Gastrocnemius medialis (tissue), 4 donors: ENCODE measurements at regions of chr5 and their contacts with region 1.

Region 1: DNA sequence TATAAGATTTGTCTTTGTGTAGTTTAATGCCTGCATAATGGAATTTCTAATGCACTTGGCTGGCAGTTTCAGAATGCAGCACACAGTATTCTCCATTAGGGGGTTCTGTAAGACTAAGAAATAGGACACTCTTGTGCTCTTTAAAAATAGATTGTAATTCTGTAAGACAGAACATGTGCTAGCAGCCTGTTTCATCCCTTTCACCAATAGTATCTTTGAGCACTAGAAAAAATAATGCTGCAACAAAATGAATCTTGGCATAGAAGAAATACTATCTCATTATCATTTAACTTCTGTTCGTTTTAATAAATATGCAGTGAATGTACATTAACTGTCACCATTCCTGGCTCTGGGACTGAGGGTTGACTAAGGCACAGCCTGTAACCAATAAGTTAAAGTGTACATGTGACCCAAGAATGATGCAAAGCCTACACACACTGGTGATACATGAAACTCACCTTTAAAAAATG is 23.8 kb upstream of the ZNF622 start:
- DNase-seq: peak in 1 of 2 donors; percentile 37
- ATAC-seq: peak; percentile 54 to 71
- H3K4me3 ChIP-seq: peak overlapping the region in 1 of 4 donors; percentile 40
- H3K27ac ChIP-seq: peak overlapping the region; percentile 90 to 99 (median 96)
- H3K4me1 ChIP-seq: peaks cover 73 to 85% of the 10 kb centered on the region in 2 donors
- H3K27me3 ChIP-seq: no peaks in the 10 kb centered on the region
- CTCF ChIP-seq: peak; percentile 50 to 90 (median 72)
- POLR2A ChIP-seq: no peak

Region 2: DNA sequence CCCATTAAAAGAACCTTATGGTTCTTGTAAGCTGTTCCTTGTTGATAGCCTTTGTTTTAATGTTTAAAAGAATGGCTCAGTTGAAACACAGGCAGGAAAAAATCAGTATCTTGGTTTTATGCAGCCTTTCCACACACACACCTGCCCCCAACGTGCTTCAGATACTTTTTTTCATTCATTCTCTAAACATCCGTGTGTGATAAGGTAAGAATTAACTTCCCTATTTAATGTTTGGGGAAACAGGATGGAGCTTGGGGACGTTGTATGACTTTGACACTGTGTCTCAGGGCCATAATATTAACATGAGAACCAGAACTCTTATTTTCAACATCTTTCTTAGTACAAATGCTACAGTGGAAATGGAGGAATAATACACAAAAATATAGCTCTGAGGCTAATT is 18.0 kb before region 1 on chr5:
- in situ Hi-C with region 1: no loop called
- intact Hi-C with region 1: loop called (anchors 2 kb)
- DNase-seq: no peak
- ATAC-seq: no peak
- H3K4me3 ChIP-seq: no peak overlapping the region
- H3K27ac ChIP-seq: peak overlapping the region in 3 of 4 donors; percentile 87 to 94 (median 92)
- H3K4me1 ChIP-seq: peaks cover 57 to 58% of the 10 kb centered on the region in 2 donors
- H3K27me3 ChIP-seq: no peaks in the 10 kb centered on the region
- CTCF ChIP-seq: no peak
- POLR2A ChIP-seq: no peak

Region 3: DNA sequence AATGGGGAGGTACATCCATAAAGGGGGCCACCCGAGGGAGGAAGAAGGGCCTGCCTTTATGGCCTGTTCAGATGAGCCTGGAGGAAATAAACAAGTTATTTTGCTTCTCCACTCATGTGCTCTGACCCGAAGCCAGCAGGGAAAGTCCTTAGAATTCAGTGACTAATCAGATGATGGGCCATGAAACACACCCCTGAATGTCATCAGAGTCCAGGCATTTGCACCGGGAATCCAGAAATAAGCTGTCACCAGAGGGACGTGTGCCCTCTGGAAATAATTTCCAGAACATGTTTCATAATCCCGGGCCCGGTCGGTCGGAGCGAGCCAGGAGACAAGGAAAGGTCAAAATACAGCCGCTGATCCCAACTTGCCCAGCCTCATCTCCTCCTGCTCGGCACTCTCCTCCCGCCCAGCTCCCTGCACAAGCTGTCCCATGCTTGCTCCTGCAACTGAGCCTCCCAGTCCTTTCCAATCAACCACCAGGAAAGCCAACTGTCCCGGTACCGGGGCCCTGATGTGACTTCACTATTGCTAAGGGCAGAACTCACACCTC is 49.9 kb after region 1 on chr5:
- in situ Hi-C with region 1: no loop called
- intact Hi-C with region 1: loop called (anchors 1 kb)
- DNase-seq: peak; percentile 96 to 97
- ATAC-seq: peak; percentile 86 to 94
- H3K4me3 ChIP-seq: peak overlapping the region; percentile 14 to 36 (median 30)
- H3K27ac ChIP-seq: peak overlapping the region; percentile 90 to 97 (median 94)
- H3K4me1 ChIP-seq: peaks cover 36 to 57% of the 10 kb centered on the region in 2 donors
- H3K27me3 ChIP-seq: no peaks in the 10 kb centered on the region
- CTCF ChIP-seq: peak in 1 of 5 experiments; percentile 34
- POLR2A ChIP-seq: peak; percentile 67 to 81

Region 4: GRCh38 chr5:16552666-16553343 is 63.4 kb after region 1 on chr5:
- in situ Hi-C with region 1: loop called (anchors 5 to 10 kb)
- intact Hi-C with region 1: loop called (anchors 1 kb)
- DNase-seq: peak; percentile 75 to 86
- ATAC-seq: peak; percentile 67 to 81
- H3K4me3 ChIP-seq: no peak overlapping the region
- H3K27ac ChIP-seq: peak overlapping the region; percentile 90 to 97 (median 94)
- H3K4me1 ChIP-seq: peaks cover 22 to 25% of the 10 kb centered on the region in 2 donors
- H3K27me3 ChIP-seq: no peaks in the 10 kb centered on the region
- CTCF ChIP-seq: peak; percentile 75 to 84 (median 81)
- POLR2A ChIP-seq: no peak

Region 5: DNA sequence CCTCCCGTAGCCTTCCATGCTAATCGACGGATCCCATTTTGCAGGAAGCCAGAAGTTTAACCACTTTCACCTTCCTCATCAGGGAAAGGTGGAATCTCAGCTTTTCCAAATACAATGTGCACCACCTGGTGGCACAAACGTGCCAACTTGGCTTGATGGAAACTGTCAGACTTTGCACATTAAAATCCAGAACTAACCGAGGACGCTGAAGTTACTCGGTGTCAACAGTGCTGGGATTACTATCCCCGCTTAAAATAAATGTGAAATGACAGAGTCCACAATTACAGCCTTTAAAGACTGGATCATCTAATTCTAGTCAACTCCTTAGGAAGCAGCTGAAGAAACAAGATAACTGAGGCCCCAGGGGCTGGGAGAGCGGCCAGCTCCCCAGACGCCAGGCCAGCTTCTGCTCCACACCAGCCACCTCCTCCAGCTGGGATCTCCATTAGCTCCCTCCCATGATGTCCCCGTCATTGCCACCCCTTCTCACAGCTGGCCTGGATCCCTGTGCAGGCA is 177.6 kb after region 1 on chr5:
- in situ Hi-C with region 1: no loop called
- intact Hi-C with region 1: loop called (anchors 5 kb)
- DNase-seq: peak in 1 of 2 donors; percentile 16
- ATAC-seq: peak; percentile 49 to 66
- H3K4me3 ChIP-seq: no peak overlapping the region
- H3K27ac ChIP-seq: peak overlapping the region in 1 of 4 donors; percentile 18
- H3K4me1 ChIP-seq: peaks cover 4 to 8% of the 10 kb centered on the region in 2 donors
- H3K27me3 ChIP-seq: no peaks in the 10 kb centered on the region
- CTCF ChIP-seq: peak; percentile 33 to 58 (median 44)
- POLR2A ChIP-seq: no peak

Region 6: GRCh38 chr5:16776611-16777251 is 287.4 kb after region 1 on chr5:
- in situ Hi-C with region 1: loop called in 1 of 4 experiments (anchors 25 kb)
- intact Hi-C with region 1: loop called (anchors 5 kb)
- DNase-seq: peak; percentile 87 to 93
- ATAC-seq: peak; percentile 89 to 93
- H3K4me3 ChIP-seq: no peak overlapping the region
- H3K27ac ChIP-seq: peak overlapping the region; percentile 80 to 88 (median 82)
- H3K4me1 ChIP-seq: peaks cover 29 to 34% of the 10 kb centered on the region in 2 donors
- H3K27me3 ChIP-seq: no peaks in the 10 kb centered on the region
- CTCF ChIP-seq: peak; percentile 55 to 78 (median 67)
- POLR2A ChIP-seq: no peak

Region 7: DNA sequence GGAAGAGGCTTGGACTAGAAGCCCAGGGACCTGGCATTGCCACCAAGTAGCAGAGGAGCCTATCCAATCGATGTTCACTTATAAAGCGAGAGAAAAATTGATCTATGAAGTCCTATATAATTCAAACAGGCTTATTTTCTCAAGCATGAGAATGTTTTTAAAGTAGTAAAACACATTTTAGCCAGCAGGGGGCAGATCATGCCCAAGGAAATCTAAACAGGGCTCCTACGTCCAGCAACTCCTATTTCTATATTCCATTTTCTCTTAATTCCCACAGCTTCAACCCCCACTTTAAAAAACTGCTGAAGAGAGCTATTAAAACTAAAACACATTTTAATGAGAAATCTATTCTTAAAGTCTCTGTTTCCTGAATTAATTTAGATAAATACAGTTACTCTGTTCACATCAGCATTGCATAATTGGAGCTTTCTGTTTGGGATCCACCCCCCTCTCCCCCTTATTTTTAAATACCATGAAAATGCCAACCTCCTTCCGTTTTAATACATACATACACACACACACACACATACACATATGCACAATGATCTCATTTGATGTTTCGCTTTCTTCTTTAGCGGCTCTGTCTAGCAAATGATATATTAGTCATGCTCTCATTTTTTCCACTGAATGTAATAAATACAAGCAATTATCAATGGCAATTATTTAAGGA is 301.8 kb after region 1 on chr5:
- in situ Hi-C with region 1: loop called in 1 of 4 experiments (anchors 25 kb)
- intact Hi-C with region 1: no loop called
- DNase-seq: no peak
- ATAC-seq: peak; percentile 64 to 83
- H3K4me3 ChIP-seq: peak overlapping the region; percentile 28 to 37 (median 32)
- H3K27ac ChIP-seq: peak overlapping the region in 2 of 4 donors; percentile 3 to 39
- H3K4me1 ChIP-seq: peaks cover 0 to 6% of the 10 kb centered on the region in 2 donors
- H3K27me3 ChIP-seq: no peaks in the 10 kb centered on the region
- CTCF ChIP-seq: peak; percentile 77 to 83 (median 79)
- POLR2A ChIP-seq: no peak